CD4-positive, alpha-beta T cell (primary cell): ENCODE measurements at regions of chr15 and their contacts with region 1.

Region 1: GRCh38 chr15:65304389-65305144 is at the start of gene RNU5B-1:
- DNase-seq: peak; percentile 37 to 92 (median 65)
- ATAC-seq: peak; percentile 74
- H3K4me3 ChIP-seq: peak within 1 kb of the TSS; percentile 61
- H3K4me3 Mint-ChIP-seq: peak within 1 kb of the TSS; percentile 93
- H3K27ac ChIP-seq: peak within 1 kb of the TSS; percentile 72 to 93
- H3K27ac Mint-ChIP-seq: peak within 1 kb of the TSS; percentile 100
- H3K4me1 ChIP-seq: peaks cover 26% of the 10 kb centered on the region
- H3K4me1 Mint-ChIP-seq: peaks cover 29% of the 10 kb centered on the region
- H3K27me3 ChIP-seq: no peaks in the 10 kb centered on the region
- H3K27me3 Mint-ChIP-seq: peaks cover 6% of the 10 kb centered on the region
- CTCF ChIP-seq: peak; percentile 96
- total RNA-seq, gene RNU5B-1: 23.7 to 34.8 TPM

Region 2: GRCh38 chr15:64836023-64836536 is 468.5 kb before region 1 on chr15:
- CTCF ChIA-PET with region 1: no interaction called
- POLR2A ChIA-PET with region 1: no interaction called
- intact Hi-C with region 1: loop called in 1 of 2 experiments (anchors 10 kb)
- DNase-seq: no peak
- ATAC-seq: no peak
- H3K4me3 ChIP-seq: no peak overlapping the region
- H3K4me3 Mint-ChIP-seq: peak overlapping the region; percentile 64
- H3K27ac ChIP-seq: peak overlapping the region in 1 of 2 donors; percentile 3
- H3K27ac Mint-ChIP-seq: peak overlapping the region; percentile 51
- H3K4me1 ChIP-seq: peaks cover 48% of the 10 kb centered on the region
- H3K4me1 Mint-ChIP-seq: peaks cover 54% of the 10 kb centered on the region
- H3K27me3 ChIP-seq: no peaks in the 10 kb centered on the region
- H3K27me3 Mint-ChIP-seq: no peaks in the 10 kb centered on the region
- CTCF ChIP-seq: peak; percentile 24

Region 3: DNA sequence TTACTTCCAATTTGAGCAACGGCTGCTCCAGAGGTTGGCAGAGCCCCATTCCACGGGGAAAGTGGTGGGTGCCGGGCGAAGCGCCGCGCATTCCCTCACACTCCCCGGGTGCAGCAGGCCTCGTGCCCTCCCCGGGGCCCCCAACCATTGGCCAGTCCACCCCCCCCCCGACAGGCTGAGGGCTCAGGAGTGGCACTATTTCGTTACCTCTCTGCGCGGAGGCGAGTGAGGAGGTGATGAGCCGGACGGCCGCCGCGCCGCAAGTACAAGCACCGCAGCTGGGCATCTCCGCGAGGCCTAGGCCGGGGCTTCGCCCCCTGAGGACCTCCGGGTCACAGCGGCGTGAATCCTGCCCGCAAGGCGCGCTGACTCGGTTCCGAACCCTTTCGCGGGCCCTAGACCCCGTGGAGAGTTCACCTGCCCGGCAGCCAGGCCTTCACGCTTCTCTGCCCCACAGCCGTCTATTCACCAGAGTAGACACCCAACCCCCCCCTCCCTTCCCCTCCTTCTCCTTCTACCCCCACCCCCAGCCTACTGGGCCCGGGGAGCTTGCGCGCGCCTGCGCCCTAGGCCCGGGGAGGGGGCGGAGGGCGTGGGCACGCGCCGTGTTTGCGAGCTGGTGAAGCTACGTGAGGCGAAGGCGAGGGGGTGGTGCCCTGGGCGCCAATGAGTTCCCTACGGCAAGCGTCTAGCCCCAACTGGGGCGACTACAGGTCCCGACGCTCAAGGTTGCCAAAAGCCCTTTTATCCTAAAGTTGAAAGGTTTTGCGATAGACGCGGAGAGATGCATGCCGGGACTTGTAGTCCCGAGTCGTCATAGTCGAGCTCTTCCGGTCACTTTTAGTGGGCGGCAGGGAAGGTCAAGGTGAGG is 119.5 kb before region 1 on chr15 and contains the start of gene CLPX:
- CTCF ChIA-PET with region 1: no interaction called
- POLR2A ChIA-PET with region 1: interaction called, 60 read pairs
- intact Hi-C with region 1: loop called (anchors 1 to 2 kb)
- DNase-seq: peak; percentile 84 to 99 (median 90)
- ATAC-seq: peak; percentile 97
- H3K4me3 ChIP-seq: peak within 1 kb of the TSS; percentile 91
- H3K4me3 Mint-ChIP-seq: peak within 1 kb of the TSS; percentile 94
- H3K27ac ChIP-seq: peak within 1 kb of the TSS; percentile 82 to 86
- H3K27ac Mint-ChIP-seq: peak within 1 kb of the TSS; percentile 85
- H3K4me1 ChIP-seq: peaks cover 29% of the 10 kb centered on the region
- H3K4me1 Mint-ChIP-seq: peaks cover 33% of the 10 kb centered on the region
- H3K27me3 ChIP-seq: no peaks in the 10 kb centered on the region
- H3K27me3 Mint-ChIP-seq: no peaks in the 10 kb centered on the region
- CTCF ChIP-seq: no peak
- total RNA-seq, gene CLPX: 29.1 to 36.3 TPM

Region 4: DNA sequence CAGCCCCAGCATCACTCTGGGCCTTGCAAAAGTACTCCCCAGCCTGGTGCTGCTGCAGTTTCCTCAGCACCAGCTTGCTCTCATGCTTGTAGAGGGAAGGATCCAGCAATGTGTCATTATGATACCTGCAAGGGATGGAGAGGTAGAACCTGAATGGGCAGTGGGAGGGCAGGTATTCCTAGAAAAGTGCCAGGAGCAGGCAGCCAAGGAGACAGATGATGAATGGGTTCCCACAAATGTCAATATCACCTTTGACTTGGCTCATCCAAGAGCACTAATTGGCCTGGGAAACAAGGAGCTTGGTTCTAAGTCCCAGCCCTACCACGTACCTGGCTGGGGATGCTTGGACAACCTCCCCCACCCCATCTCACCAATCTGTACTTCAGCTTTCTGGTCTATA is 102.7 kb before region 1 on chr15:
- CTCF ChIA-PET with region 1: no interaction called
- POLR2A ChIA-PET with region 1: no interaction called
- intact Hi-C with region 1: no loop called
- DNase-seq: no peak
- ATAC-seq: no peak
- H3K4me3 ChIP-seq: no peak overlapping the region
- H3K4me3 Mint-ChIP-seq: no peak overlapping the region
- H3K27ac ChIP-seq: no peak overlapping the region
- H3K27ac Mint-ChIP-seq: no peak overlapping the region
- H3K4me1 ChIP-seq: no peaks in the 10 kb centered on the region
- H3K4me1 Mint-ChIP-seq: no peaks in the 10 kb centered on the region
- H3K27me3 ChIP-seq: no peaks in the 10 kb centered on the region
- H3K27me3 Mint-ChIP-seq: no peaks in the 10 kb centered on the region
- CTCF ChIP-seq: no peak

Region 5: DNA sequence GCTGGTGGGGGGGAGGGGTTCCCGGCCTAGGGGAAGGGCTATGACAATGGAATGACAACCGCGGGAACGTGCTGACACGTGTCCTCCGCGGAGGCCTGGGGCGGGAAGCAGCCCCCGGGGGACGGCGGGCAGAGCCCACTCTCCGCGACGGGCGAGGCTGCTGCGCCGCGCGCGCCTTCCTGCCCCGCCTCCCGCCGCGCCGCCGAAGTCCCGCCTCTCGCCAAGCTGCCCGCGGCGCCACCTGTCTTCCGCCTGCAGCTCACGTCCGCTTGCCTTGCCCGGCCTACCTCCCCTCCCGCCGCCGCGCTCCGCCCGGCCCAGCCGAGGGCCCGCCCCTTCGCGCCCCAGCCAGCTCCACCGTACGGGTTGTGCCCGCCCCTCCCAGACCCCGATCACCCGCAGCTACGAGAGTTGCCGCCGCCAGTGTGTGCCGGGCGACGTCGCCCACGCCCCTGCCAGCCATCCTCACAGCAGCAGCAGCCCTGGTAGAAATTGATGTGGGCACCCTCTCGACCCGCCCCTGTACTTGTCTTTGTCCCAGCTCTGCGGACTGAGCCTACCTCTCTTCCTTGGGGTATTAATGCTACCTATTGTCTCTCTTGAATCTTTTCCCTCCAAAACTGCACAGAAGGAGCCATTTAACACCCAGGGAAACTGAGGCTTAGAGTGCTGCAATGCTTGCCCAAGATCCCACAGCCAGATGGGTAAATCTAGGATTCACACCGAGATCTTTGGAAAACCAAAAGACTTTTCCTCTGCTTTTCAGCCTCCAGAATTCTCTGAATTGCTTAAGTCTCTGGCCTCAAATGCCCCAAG is 17.7 kb before region 1 on chr15 and contains the start of gene PARP16:
- CTCF ChIA-PET with region 1: interaction called, 6 read pairs
- POLR2A ChIA-PET with region 1: interaction called, 136 read pairs
- intact Hi-C with region 1: loop called in 1 of 2 experiments (anchors 1 kb)
- DNase-seq: peak; percentile 82 to 96 (median 92)
- ATAC-seq: peak; percentile 95
- H3K4me3 ChIP-seq: peak within 1 kb of the TSS; percentile 93
- H3K4me3 Mint-ChIP-seq: peak within 1 kb of the TSS; percentile 93
- H3K27ac ChIP-seq: peak within 1 kb of the TSS; percentile 83 to 85
- H3K27ac Mint-ChIP-seq: peak within 1 kb of the TSS; percentile 94
- H3K4me1 ChIP-seq: peaks cover 37% of the 10 kb centered on the region
- H3K4me1 Mint-ChIP-seq: peaks cover 47% of the 10 kb centered on the region
- H3K27me3 ChIP-seq: no peaks in the 10 kb centered on the region
- H3K27me3 Mint-ChIP-seq: no peaks in the 10 kb centered on the region
- CTCF ChIP-seq: peak; percentile 1
- total RNA-seq, gene PARP16: 11.3 to 12.9 TPM

Region 6: GRCh38 chr15:65318870-65319356 is 14.3 kb after region 1 on chr15:
- CTCF ChIA-PET with region 1: interaction called, 5 read pairs
- POLR2A ChIA-PET with region 1: interaction called, 18 read pairs
- intact Hi-C with region 1: no loop called
- DNase-seq: peak; percentile 56 to 87 (median 69)
- ATAC-seq: peak; percentile 100
- H3K4me3 ChIP-seq: no peak overlapping the region
- H3K4me3 Mint-ChIP-seq: no peak overlapping the region
- H3K27ac ChIP-seq: no peak overlapping the region
- H3K27ac Mint-ChIP-seq: no peak overlapping the region
- H3K4me1 ChIP-seq: peaks cover 2% of the 10 kb centered on the region
- H3K4me1 Mint-ChIP-seq: no peaks in the 10 kb centered on the region
- H3K27me3 ChIP-seq: peaks cover 0 to 8% of the 10 kb centered on the region in 2 experiments
- H3K27me3 Mint-ChIP-seq: peaks cover 4% of the 10 kb centered on the region
- CTCF ChIP-seq: peak; percentile 92

Region 7: DNA sequence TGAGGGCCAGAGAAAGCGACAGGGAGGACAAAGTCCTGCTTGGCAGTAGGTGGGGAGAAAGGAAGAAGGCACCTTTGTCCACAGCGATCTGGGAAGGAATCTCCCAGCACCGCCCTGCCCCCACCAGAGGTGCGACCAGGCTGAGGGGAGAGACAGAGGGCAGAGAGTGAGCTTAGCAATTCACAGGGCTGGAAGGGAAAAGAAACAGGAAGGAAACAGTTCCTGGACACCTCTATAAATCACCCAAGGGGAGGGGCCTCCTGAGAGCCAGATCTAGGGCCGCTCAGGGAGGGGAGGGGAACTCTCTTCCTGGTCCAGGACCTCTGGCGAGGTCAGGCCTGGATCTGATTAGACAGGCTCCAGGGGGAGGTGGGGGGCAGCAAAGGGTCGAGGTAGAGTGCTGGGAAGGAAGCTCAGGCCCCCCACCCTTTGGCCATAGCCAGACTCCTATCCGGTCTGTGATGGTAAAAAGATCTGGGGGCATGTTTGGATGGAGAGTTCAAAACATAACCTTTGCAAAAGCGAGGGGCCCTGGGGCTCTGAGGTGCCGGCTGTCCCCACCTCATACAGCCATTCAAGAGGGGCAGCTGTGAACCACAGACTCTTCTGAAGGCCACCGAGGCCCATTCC is 35.5 kb after region 1 on chr15:
- CTCF ChIA-PET with region 1: no interaction called
- POLR2A ChIA-PET with region 1: no interaction called
- intact Hi-C with region 1: no loop called
- DNase-seq: no peak
- ATAC-seq: no peak
- H3K4me3 ChIP-seq: no peak overlapping the region
- H3K4me3 Mint-ChIP-seq: no peak overlapping the region
- H3K27ac ChIP-seq: no peak overlapping the region
- H3K27ac Mint-ChIP-seq: no peak overlapping the region
- H3K4me1 ChIP-seq: no peaks in the 10 kb centered on the region
- H3K4me1 Mint-ChIP-seq: no peaks in the 10 kb centered on the region
- H3K27me3 ChIP-seq: peaks cover 3 to 5% of the 10 kb centered on the region in 2 experiments
- H3K27me3 Mint-ChIP-seq: peaks cover 5% of the 10 kb centered on the region
- CTCF ChIP-seq: no peak

Region 8: DNA sequence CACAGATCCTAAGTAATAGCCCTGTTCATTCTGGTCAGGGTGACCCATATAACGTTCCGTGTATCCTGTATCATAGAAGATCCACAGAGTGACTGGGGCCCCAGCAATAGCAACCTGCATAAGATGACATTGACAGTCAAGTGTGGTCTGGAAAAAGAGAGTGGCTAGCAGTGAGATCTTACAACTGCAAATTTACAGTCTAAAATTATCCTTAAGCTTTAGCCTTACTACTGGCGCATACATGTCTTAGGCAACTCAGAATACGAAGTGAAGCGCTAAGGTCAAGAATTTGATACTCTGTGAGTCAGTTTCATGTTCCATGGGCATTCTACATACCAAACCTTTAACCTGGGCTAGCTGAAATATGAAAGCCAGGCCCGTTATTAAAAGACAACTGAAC is 147.4 kb after region 1 on chr15:
- CTCF ChIA-PET with region 1: no interaction called
- POLR2A ChIA-PET with region 1: no interaction called
- intact Hi-C with region 1: no loop called
- DNase-seq: no peak
- ATAC-seq: no peak
- H3K4me3 ChIP-seq: no peak overlapping the region
- H3K4me3 Mint-ChIP-seq: no peak overlapping the region
- H3K27ac ChIP-seq: no peak overlapping the region
- H3K27ac Mint-ChIP-seq: no peak overlapping the region
- H3K4me1 ChIP-seq: no peaks in the 10 kb centered on the region
- H3K4me1 Mint-ChIP-seq: no peaks in the 10 kb centered on the region
- H3K27me3 ChIP-seq: no peaks in the 10 kb centered on the region
- H3K27me3 Mint-ChIP-seq: no peaks in the 10 kb centered on the region
- CTCF ChIP-seq: no peak